ENCODE measurements at regions of chr22 and their contacts with region 1.

Region 1: GRCh38 chr22:45336971-45337431 is 27.3 kb downstream of the FAM118A start:
- DNase-seq: peak; percentile 60 to 85
- ATAC-seq: peak; percentile 12 to 20
- H3K4me3 ChIP-seq: peak overlapping the region in 1 of 4 donors; percentile 23
- H3K27ac ChIP-seq: peak overlapping the region; percentile 88 to 91 (median 90)
- H3K4me1 ChIP-seq: peaks cover 53 to 62% of the 10 kb centered on the region in 2 donors
- H3K27me3 ChIP-seq: no peaks in the 10 kb centered on the region
- CTCF ChIP-seq: no peak
- POLR2A ChIP-seq: no peak

Region 2: GRCh38 chr22:45290410-45290936 is 46.5 kb before region 1 on chr22:
- in situ Hi-C with region 1: no loop called
- intact Hi-C with region 1: loop called (anchors 2 kb)
- DNase-seq: peak; percentile 90 to 91
- ATAC-seq: peak; percentile 93 to 95
- H3K4me3 ChIP-seq: peak overlapping the region in 2 of 4 donors; percentile 12 to 15
- H3K27ac ChIP-seq: peak overlapping the region; percentile 48 to 74 (median 65)
- H3K4me1 ChIP-seq: peaks cover 10 to 13% of the 10 kb centered on the region in 2 donors
- H3K27me3 ChIP-seq: no peaks in the 10 kb centered on the region
- CTCF ChIP-seq: no peak
- POLR2A ChIP-seq: peak; percentile 73 to 74

Region 3: GRCh38 chr22:45435544-45436139 is 98.6 kb after region 1 on chr22:
- in situ Hi-C with region 1: no loop called
- intact Hi-C with region 1: loop called (anchors 1 kb)
- DNase-seq: peak; percentile 72 to 81
- ATAC-seq: peak; percentile 95 to 98
- H3K4me3 ChIP-seq: peak overlapping the region; percentile 27 to 45 (median 34)
- H3K27ac ChIP-seq: peak overlapping the region; percentile 53 to 65 (median 62)
- H3K4me1 ChIP-seq: peaks cover 0 to 7% of the 10 kb centered on the region in 2 donors
- H3K27me3 ChIP-seq: no peaks in the 10 kb centered on the region
- CTCF ChIP-seq: peak; percentile 93 to 98 (median 96)
- POLR2A ChIP-seq: no peak